Naive thymus-derived CD4-positive, alpha-beta T cell (primary cell): ENCODE measurements at regions of chr1 and their contacts with region 1.

Region 1: GRCh38 chr1:33295450-33296081 is 25.3 kb downstream of the A3GALT2 start:
- DNase-seq: peak; percentile 67 to 88 (median 79)
- ATAC-seq: peak; percentile 95
- H3K4me3 ChIP-seq: no peak overlapping the region
- H3K4me3 Mint-ChIP-seq: no peak overlapping the region
- H3K27ac ChIP-seq: no peak overlapping the region
- H3K27ac Mint-ChIP-seq: peak overlapping the region in 6 of 9 donors; percentile 8 to 76 (median 52)
- H3K4me1 ChIP-seq: no peaks in the 10 kb centered on the region
- H3K4me1 Mint-ChIP-seq: peaks cover 4 to 17% (median 13%) of the 10 kb centered on the region in 7 donors
- H3K27me3 ChIP-seq: no peaks in the 10 kb centered on the region
- H3K27me3 Mint-ChIP-seq: no peaks in the 10 kb centered on the region

Region 2: GRCh38 chr1:32939655-32940371 is 355.8 kb before region 1 on chr1:
- CTCF ChIA-PET with region 1: no interaction called
- POLR2A ChIA-PET with region 1: no interaction called
- intact Hi-C with region 1: loop called in 1 of 2 experiments (anchors 10 kb)
- DNase-seq: no peak
- ATAC-seq: peak; percentile 52
- H3K4me3 ChIP-seq: no peak overlapping the region
- H3K4me3 Mint-ChIP-seq: peak overlapping the region in 1 of 10 donors; percentile 52
- H3K27ac ChIP-seq: no peak overlapping the region
- H3K27ac Mint-ChIP-seq: peak overlapping the region in 1 of 9 donors; percentile 34
- H3K4me1 ChIP-seq: peaks cover 0 to 7% of the 10 kb centered on the region in 2 donors
- H3K4me1 Mint-ChIP-seq: peaks cover 0 to 62% (median 12%) of the 10 kb centered on the region in 7 donors
- H3K27me3 ChIP-seq: no peaks in the 10 kb centered on the region
- H3K27me3 Mint-ChIP-seq: no peaks in the 10 kb centered on the region

Region 3: DNA sequence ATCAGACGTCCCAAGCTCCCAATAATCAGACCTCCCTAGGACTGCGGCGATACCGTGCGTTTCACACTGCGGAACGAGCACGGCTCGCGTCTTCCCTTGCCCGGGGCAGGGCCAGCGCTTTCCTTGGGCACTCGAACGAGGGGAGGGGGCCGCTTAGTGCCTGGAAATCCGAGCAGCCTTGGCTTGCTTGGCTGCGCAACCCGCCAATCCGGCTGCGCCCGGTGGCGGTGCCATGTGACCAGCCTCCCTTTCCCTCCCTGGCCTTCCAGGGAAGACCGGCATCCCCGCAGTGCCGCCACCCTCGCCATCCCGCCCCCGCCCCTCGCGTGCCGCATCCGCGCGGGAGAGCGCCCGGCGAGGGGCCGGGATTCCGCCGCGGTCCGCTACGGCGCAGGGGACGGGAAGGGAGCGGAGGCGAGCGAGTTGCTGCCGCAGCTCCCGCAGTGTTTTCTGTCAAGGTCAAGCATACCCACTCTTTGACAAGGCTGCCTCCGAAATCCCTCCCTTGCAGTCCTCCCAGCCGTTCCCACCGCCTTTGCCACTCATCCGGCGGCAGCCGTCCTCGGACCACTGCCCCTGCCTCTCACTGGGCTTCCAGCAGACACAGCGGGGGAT is 322.6 kb before region 1 on chr1:
- CTCF ChIA-PET with region 1: no interaction called
- POLR2A ChIA-PET with region 1: no interaction called
- intact Hi-C with region 1: no loop called
- DNase-seq: no peak
- ATAC-seq: no peak
- H3K4me3 ChIP-seq: peak overlapping the region; percentile 3
- H3K4me3 Mint-ChIP-seq: peak overlapping the region; percentile 32 to 82 (median 63)
- H3K27ac ChIP-seq: no peak overlapping the region
- H3K27ac Mint-ChIP-seq: peak overlapping the region in 1 of 9 donors; percentile 55
- H3K4me1 ChIP-seq: no peaks in the 10 kb centered on the region
- H3K4me1 Mint-ChIP-seq: peaks cover 8 to 36% (median 11%) of the 10 kb centered on the region in 7 donors
- H3K27me3 ChIP-seq: peaks cover 8 to 9% of the 10 kb centered on the region in 2 donors
- H3K27me3 Mint-ChIP-seq: peaks cover 18 to 24% (median 23%) of the 10 kb centered on the region in 5 donors

Region 4: GRCh38 chr1:33306648-33307493 is 11.3 kb after region 1 on chr1:
- CTCF ChIA-PET with region 1: interaction called, 13 read pairs
- POLR2A ChIA-PET with region 1: interaction called, 3 read pairs
- intact Hi-C with region 1: no loop called
- DNase-seq: peak in 1 of 9 donors; percentile 19
- ATAC-seq: no peak
- H3K4me3 ChIP-seq: no peak overlapping the region
- H3K4me3 Mint-ChIP-seq: peak overlapping the region in 2 of 10 donors; percentile 19 to 51
- H3K27ac ChIP-seq: no peak overlapping the region
- H3K27ac Mint-ChIP-seq: no peak overlapping the region
- H3K4me1 ChIP-seq: peaks cover 8% of the 10 kb centered on the region in 2 donors
- H3K4me1 Mint-ChIP-seq: peaks cover 7 to 25% (median 20%) of the 10 kb centered on the region in 7 donors
- H3K27me3 ChIP-seq: no peaks in the 10 kb centered on the region
- H3K27me3 Mint-ChIP-seq: peaks cover 9 to 22% (median 13%) of the 10 kb centered on the region in 5 donors

Region 5: DNA sequence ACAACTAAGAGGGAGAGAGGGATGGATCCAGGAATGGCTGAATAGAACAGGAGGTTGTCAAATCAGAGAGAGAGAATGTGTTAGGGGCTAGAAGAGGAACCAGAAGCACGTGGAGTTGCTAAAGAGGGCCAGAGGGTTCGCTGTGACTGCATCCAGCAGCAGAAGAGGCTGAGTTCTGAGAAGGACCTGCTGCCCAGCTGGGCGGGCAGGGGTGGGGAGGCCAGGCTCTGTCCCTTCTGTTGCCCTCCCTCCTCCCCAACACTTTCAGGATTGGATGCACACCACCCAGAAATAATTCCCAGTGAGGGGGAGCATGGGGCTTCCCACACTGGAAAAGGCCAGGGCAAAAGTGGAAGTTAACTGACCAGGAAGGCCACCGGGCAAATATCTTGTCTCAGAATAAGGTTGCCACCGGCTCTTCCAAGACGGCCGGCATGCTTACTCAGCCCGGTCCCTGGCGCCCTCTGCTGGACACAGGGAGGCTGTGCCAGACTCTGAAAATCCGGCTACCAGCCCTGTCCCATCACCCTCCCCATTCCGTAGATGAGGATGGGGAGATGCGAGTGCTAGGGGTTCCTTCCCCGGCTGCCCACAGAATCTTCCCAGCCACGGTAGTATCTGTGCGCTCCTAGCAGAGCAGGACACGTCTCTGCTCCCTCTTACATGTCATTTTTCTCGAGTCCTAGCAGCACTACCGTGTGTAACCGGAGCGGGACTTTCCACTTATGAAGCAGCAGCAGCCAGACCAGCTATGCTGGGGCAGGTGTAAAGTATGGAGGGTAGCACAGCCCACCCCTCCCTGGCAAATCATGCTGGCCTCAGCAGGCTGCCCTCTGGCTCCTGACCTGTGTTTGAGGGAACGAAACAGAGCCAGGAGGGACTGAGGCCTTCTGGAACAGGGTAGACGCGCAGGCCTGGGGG is 72.2 kb after region 1 on chr1:
- CTCF ChIA-PET with region 1: interaction called, 118 read pairs
- POLR2A ChIA-PET with region 1: interaction called, 4 read pairs
- intact Hi-C with region 1: loop called in 1 of 2 experiments (anchors 1 kb)
- DNase-seq: peak; percentile 65 to 87 (median 82)
- ATAC-seq: peak; percentile 98
- H3K4me3 ChIP-seq: no peak overlapping the region
- H3K4me3 Mint-ChIP-seq: no peak overlapping the region
- H3K27ac ChIP-seq: no peak overlapping the region
- H3K27ac Mint-ChIP-seq: peak overlapping the region in 1 of 9 donors; percentile 26
- H3K4me1 ChIP-seq: no peaks in the 10 kb centered on the region
- H3K4me1 Mint-ChIP-seq: peaks cover 0 to 2% (median 0%) of the 10 kb centered on the region in 7 donors
- H3K27me3 ChIP-seq: no peaks in the 10 kb centered on the region
- H3K27me3 Mint-ChIP-seq: peaks cover 0 to 11% (median 0%) of the 10 kb centered on the region in 5 donors

Region 6: DNA sequence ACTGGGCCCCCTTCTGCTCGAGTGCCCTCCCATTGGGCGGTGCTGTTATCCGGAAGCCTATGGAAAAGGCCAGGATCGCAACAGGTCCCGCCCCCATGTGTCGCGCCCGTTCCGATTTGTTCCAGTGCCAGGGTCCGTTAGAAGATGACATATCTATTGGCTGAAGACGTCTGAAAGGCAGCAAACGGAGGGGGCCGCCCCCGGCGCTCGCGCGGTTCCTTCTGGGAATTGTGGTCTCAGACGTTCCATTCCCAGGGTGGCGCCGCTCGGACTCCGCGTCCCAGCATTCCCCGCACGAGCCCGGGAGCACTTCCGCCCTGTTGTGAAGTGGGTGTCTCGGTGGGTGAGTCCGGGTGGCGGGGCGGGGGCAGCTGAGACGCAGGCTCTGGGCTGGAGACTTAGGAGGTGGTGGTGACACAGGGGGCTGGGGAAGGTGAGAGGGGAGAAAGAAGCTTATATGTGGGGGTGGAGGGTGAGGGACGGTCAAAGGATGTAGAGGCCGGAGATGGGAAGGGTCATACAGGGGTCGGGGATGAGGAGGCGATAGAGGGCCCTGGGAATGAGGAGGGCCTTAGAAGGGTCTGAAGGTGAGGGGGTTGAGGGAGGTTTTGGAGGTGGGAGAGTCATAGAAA is 176.9 kb after region 1 on chr1 and contains the start of gene ZSCAN20:
- CTCF ChIA-PET with region 1: interaction called, 5 read pairs
- POLR2A ChIA-PET with region 1: no interaction called
- intact Hi-C with region 1: loop called in 1 of 2 experiments (anchors 1 kb)
- DNase-seq: peak; percentile 58 to 82 (median 79)
- ATAC-seq: peak; percentile 96
- H3K4me3 ChIP-seq: peak within 1 kb of the TSS; percentile 47
- H3K4me3 Mint-ChIP-seq: peak within 1 kb of the TSS; percentile 84 to 98 (median 92)
- H3K27ac ChIP-seq: peak within 1 kb of the TSS; percentile 60
- H3K27ac Mint-ChIP-seq: peak within 1 kb of the TSS; percentile 37 to 95 (median 76)
- H3K4me1 ChIP-seq: peaks cover 11 to 14% of the 10 kb centered on the region in 2 donors
- H3K4me1 Mint-ChIP-seq: peaks cover 20 to 39% (median 30%) of the 10 kb centered on the region in 7 donors
- H3K27me3 ChIP-seq: no peaks in the 10 kb centered on the region
- H3K27me3 Mint-ChIP-seq: no peaks in the 10 kb centered on the region
- total RNA-seq, gene ZSCAN20: 0.77 to 3.0 (median 2.6) TPM